ENCODE measurements at regions of chr1 and their contacts with region 1.

Region 1: DNA sequence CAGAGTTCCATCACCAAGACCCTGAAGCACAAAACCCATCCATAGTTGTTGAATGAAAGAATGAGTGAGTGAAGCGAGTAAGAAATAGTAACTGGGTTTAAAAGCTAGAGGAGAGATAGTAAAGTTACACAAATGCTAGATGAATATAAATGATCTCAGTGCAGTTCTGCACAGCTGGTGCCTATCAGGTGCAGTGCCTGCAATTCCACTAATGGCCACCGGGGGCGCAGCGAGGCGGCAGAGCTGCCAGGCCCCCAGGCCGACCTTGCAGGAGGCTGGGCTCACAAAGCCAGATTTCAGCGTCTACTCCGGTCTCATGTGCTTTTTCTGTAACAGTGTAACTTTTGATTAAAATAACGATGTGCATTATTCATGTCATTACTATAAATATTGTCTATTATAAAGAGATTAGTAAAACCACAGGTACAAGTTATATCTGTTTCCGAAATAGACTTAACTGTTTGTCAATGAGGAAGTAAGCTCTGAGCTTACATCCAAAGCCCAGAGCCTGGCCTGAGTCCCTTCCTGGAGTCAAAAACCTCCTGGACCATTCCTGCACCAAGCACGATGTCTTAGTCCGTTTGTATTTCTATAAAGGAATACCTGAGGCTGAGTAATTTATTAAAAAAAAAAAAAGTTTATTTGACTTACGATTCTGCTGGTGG is 477.6 kb downstream of the NPHP4 start:
- DNase-seq: peak; percentile 70
- ATAC-seq: peak; percentile 74 to 89 (median 83)
- H3K4me3 ChIP-seq: no peak overlapping the region
- H3K27ac ChIP-seq: no peak overlapping the region
- H3K4me1 ChIP-seq: peaks cover 0 to 4% (median 0%) of the 10 kb centered on the region in 4 donors
- H3K27me3 ChIP-seq: no peaks in the 10 kb centered on the region
- CTCF ChIP-seq: peak; percentile 91 to 100 (median 100)
- POLR2A ChIP-seq: no peak

Region 2: GRCh38 chr1:5745776-5746610 is 231.3 kb after region 1 on chr1:
- intact Hi-C with region 1: loop called (anchors 5 to 10 kb)
- DNase-seq: peak; percentile 65 to 78 (median 72)
- ATAC-seq: peak; percentile 84 to 92 (median 87)
- H3K4me3 ChIP-seq: no peak overlapping the region
- H3K27ac ChIP-seq: no peak overlapping the region
- H3K4me1 ChIP-seq: no peaks in the 10 kb centered on the region
- H3K27me3 ChIP-seq: no peaks in the 10 kb centered on the region
- CTCF ChIP-seq: peak; percentile 80 to 98 (median 94)
- POLR2A ChIP-seq: no peak

Region 3: GRCh38 chr1:5975133-5975880 is 460.7 kb after region 1 on chr1:
- intact Hi-C with region 1: loop called in 1 of 2 experiments (anchors 5 kb)
- DNase-seq: peak in 2 of 3 donors; percentile 56 to 66
- ATAC-seq: peak; percentile 88 to 95 (median 92)
- H3K4me3 ChIP-seq: no peak overlapping the region
- H3K27ac ChIP-seq: no peak overlapping the region
- H3K4me1 ChIP-seq: no peaks in the 10 kb centered on the region
- H3K27me3 ChIP-seq: no peaks in the 10 kb centered on the region
- CTCF ChIP-seq: peak; percentile 66 to 84 (median 82)
- POLR2A ChIP-seq: no peak